ENCODE measurements at regions of chr19 and their contacts with region 1.

Region 1: DNA sequence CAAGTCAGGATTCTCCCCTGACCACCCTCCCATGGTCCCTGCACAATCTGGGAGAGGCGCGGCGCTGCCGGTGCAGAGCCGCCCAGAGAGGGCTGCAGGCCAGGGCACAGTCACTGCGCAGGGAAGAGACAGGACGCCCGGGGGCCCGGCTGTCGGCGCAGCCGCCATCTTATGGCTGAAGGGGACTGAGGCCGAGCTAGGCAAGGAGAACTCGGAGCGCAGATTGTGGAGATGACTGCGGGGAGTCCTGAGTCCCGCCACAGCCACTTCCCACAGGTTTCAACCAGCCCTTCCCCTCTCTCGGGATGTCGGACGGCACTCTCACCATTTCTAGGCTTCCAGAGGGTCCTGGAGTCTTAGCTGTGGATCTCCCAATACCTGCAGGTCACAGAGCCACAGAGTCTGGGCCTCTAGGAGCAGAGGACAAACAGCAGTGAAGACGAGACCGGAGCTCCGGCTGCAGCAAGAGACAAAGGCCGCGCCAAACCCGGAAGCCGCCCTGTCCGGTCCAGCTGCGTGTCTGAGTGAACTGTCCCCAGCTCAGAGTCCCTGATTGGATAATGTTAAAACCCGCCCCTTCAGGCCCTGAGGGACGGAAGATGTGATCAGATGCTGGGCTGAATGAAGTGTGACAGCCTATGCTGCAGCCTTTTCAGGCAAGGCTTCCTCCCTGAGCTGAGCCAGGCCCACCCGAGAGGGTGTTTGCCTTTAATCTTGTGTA is at the start of gene ZNF708:
- DNase-seq: peak; percentile 78 to 87
- ATAC-seq: peak; percentile 100
- H3K4me3 ChIP-seq: peak within 1 kb of the TSS; percentile 73 to 88 (median 83)
- H3K27ac ChIP-seq: peak within 1 kb of the TSS; percentile 91 to 95 (median 93)
- H3K4me1 ChIP-seq: peaks cover 3 to 14% of the 10 kb centered on the region in 2 donors
- H3K27me3 ChIP-seq: no peaks in the 10 kb centered on the region
- CTCF ChIP-seq: no peak
- POLR2A ChIP-seq: peak; percentile 70 to 71
- total RNA-seq, gene ZNF708: 1.1 to 3.5 (median 3.1) TPM

Region 2: GRCh38 chr19:21358768-21359451 is 29.9 kb after region 1 on chr19 and contains the start of gene ZNF738:
- in situ Hi-C with region 1: no loop called
- intact Hi-C with region 1: loop called (anchors 2 kb)
- DNase-seq: peak; percentile 76 to 84
- ATAC-seq: peak; percentile 91 to 99
- H3K4me3 ChIP-seq: peak within 1 kb of the TSS; percentile 63 to 78 (median 72)
- H3K27ac ChIP-seq: peak within 1 kb of the TSS; percentile 68 to 73 (median 71)
- H3K4me1 ChIP-seq: peaks cover 0 to 4% of the 10 kb centered on the region in 2 donors
- H3K27me3 ChIP-seq: no peaks in the 10 kb centered on the region
- CTCF ChIP-seq: no peak
- POLR2A ChIP-seq: peak in 1 of 2 donors; percentile 39
- total RNA-seq, gene ZNF738: 0.85 to 0.97 TPM in 2 of 4 donors, not detected in the others

Region 3: DNA sequence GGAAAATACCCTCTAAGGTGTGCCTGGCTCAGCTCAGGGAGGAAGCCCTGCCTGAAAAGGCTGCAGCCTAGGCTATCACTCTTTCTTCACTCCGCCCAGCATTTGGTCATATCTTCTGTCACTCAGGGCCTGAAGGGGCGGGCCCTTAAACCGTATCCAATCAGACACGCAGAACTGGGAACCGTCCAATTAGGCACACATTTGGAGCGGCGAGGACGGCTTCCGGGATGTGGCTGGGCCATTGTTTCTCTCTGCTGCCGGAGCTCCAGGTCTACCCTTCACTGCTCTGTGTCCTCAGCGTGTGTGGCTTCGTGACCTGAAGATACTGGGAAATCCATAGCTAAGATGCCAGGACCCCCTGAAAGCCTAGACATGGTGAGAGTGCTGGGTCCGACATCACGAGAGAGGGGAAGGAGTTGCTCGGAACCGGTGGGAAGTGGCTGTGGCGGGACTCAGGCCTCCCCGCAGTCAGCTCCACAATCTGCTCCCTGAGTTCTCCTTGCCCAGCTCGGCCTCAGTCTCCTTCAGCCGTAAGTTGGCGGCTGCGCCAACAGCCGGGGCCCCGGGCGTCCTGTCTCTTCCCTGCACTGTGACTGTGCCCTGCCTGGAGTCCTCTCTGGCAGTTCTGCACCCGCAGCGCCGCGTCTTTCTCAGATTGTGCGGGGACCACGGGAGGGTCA is 68.0 kb after region 1 on chr19 and contains the start of gene ZNF493:
- in situ Hi-C with region 1: no loop called
- intact Hi-C with region 1: loop called (anchors 1 kb)
- DNase-seq: peak; percentile 89 to 94
- ATAC-seq: peak; percentile 100
- H3K4me3 ChIP-seq: peak within 1 kb of the TSS; percentile 66 to 87 (median 83)
- H3K27ac ChIP-seq: peak within 1 kb of the TSS; percentile 82 to 88 (median 84)
- H3K4me1 ChIP-seq: peaks cover 13 to 20% of the 10 kb centered on the region in 2 donors
- H3K27me3 ChIP-seq: no peaks in the 10 kb centered on the region
- CTCF ChIP-seq: no peak
- POLR2A ChIP-seq: peak; percentile 53 to 79
- total RNA-seq, gene ZNF493: 2.2 to 6.5 (median 3.1) TPM

Region 4: GRCh38 chr19:21422244-21422643 is 93.2 kb after region 1 on chr19:
- in situ Hi-C with region 1: no loop called
- intact Hi-C with region 1: no loop called
- DNase-seq: no peak
- ATAC-seq: no peak
- H3K4me3 ChIP-seq: peak overlapping the region in 1 of 4 donors; percentile 11
- H3K27ac ChIP-seq: no peak overlapping the region
- H3K4me1 ChIP-seq: no peaks in the 10 kb centered on the region
- H3K27me3 ChIP-seq: no peaks in the 10 kb centered on the region
- CTCF ChIP-seq: no peak
- POLR2A ChIP-seq: no peak

Region 5: GRCh38 chr19:21505459-21506451 is 176.7 kb after region 1 on chr19 and contains the start of gene ZNF429:
- in situ Hi-C with region 1: no loop called
- intact Hi-C with region 1: loop called (anchors 2 kb)
- DNase-seq: peak; percentile 90 to 94
- ATAC-seq: peak; percentile 99 to 100
- H3K4me3 ChIP-seq: peak within 1 kb of the TSS; percentile 71 to 87 (median 78)
- H3K27ac ChIP-seq: peak within 1 kb of the TSS; percentile 88 to 94 (median 92)
- H3K4me1 ChIP-seq: peaks cover 14 to 18% of the 10 kb centered on the region in 2 donors
- H3K27me3 ChIP-seq: no peaks in the 10 kb centered on the region
- CTCF ChIP-seq: no peak
- POLR2A ChIP-seq: peak; percentile 78 to 85
- total RNA-seq, gene ZNF429: 3.4 to 11.1 (median 7.4) TPM

Measured in gastrocnemius medialis (tissue), 4 donors.